Mucosa of descending colon (tissue), 3 donors: ENCODE measurements at regions of chr9 and their contacts with region 1.

Region 1: GRCh38 chr9:130770679-130771442 is 64.2 kb upstream of the ABL1 start:
- DNase-seq: peak in 1 of 3 donors; percentile 48
- ATAC-seq: peak; percentile 48
- H3K4me3 ChIP-seq: no peak overlapping the region
- H3K4me1 ChIP-seq: peaks cover 38% of the 10 kb centered on the region
- CTCF ChIP-seq: peak; percentile 38

Region 2: DNA sequence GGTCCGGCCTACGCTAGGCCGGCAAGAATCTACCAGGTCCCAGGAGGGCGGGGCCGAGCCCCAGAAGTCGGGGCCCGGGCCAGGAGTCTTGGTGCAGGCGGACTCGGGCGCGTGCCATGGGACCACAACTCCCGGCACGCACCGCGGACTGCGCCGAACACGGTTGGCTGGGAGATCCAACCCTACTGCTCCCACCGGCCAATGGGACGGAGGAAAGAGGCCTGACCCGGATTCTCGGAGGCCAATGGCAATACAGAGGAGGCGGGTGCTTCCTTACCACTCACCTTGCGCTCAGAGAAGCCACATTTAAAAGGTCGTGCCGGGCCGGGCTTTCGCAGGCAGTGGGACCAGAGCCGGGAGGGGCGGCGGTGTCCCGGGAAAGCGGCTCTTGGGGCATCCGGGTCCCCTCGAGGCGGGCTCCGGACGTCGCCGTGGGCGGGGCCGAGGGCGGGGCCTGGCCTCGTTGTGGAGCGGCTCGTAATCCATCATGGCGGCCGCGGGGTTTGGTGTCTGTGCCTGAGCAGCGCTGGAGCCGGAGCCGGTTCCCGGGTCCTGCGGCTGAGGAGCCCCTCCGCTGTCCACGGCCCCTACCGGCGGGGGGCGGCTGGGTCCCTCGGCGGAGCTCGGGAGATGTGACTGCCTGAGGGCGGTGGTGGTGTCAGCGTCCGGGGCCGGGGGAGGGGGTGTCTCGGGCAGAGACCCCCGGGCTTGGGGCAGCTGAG is 58.1 kb before region 1 on chr9:
- intact Hi-C with region 1: loop called in 1 of 2 experiments (anchors 10 kb)
- DNase-seq: peak; percentile 97 to 98 (median 98)
- ATAC-seq: peak; percentile 96
- H3K4me3 ChIP-seq: peak overlapping the region; percentile 98
- H3K4me1 ChIP-seq: peaks cover 18% of the 10 kb centered on the region
- CTCF ChIP-seq: no peak

Region 3: DNA sequence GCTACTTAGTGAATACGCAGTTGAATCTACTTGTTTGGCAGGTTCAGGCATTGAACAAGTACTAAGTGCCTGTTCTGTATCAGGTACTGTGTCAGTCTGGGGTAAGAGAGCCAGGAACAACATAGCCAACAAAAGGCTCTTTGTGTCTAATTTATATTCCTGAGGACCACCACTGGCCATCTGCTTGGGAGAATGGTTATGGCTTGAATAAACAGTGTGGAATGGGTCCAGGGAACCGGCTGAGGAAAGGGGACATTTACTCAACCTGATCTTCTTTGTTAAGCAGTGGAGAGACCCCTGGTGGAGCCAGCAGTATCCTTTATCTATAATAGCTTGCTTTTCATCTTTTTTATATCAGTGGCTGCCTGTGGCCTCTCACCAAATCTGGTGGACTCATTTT is 38.7 kb before region 1 on chr9:
- intact Hi-C with region 1: loop called in 1 of 2 experiments (anchors 5 kb)
- DNase-seq: no peak
- ATAC-seq: peak; percentile 12
- H3K4me3 ChIP-seq: no peak overlapping the region
- H3K4me1 ChIP-seq: peaks cover 20% of the 10 kb centered on the region
- CTCF ChIP-seq: no peak

Region 4: DNA sequence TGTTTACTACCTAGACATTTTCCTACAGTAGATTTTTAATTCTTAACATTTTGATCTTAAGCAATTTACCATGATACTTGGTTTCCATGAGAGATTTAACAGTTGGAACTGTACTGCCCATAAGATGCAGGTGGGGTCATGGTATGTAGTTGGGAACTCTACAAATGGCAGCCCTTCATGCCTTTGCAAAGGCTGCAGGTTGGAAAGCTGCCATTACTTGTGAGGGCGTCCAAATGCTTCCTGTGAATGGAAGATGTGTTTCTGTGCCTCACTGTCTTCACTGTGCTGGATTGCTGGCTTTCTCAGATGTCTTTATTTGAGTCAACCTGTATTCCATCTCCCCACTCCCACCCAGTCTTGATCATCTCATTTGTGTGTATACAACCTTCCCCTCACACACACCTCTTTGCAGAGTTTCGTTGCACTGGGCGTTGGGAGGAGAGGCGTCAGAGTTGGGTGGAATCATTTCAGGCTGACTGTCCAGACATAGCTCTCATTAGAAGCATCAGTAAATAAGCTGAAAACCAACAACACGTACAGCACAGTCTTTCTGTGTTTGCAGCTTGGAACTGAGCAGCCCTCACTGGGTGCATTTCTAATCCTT is 49.4 kb after region 1 on chr9:
- intact Hi-C with region 1: no loop called
- DNase-seq: no peak
- ATAC-seq: no peak
- H3K4me3 ChIP-seq: no peak overlapping the region
- H3K4me1 ChIP-seq: peaks cover 18% of the 10 kb centered on the region
- CTCF ChIP-seq: no peak

Region 5: DNA sequence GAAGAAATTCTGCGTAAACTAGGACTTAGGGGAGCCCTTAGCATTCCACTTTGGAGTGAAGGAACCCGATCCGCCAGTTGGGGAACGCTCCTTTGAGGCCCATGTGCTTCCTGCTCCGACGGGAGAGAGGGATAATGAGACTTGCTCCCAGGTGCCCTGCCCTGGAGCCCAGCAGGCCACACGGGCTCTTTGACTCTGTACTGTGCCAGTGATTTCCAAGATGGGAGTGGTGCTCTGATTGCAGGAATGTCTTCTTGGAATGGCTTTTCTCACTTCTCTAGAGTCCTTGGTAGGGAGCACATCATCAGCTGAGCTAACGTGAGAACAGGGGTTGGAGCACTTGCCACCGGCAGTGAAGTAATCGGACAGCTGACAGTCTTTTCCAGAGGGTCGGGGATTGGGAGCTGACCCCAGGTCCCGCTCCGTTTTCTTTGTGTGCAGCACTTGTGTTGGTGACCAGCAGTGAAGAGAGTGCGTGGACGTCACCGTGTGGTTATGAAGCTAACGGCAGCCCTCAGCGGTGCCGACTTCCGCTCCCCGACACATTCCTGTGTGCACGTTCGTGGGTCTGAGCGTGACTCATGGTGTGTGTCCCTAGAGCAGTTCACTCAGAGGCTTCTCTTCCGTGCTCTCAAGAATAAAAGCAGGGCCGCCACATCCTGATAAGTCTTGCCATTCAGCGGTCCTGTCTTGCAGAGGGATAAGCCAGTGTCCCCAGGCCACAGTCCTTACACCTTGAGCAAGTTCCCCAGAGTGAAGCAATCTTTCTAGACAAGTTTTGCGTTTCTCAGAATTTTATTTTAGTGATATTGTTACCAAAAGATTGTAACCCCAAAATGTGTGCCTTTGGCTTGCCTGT is 89.8 kb after region 1 on chr9:
- intact Hi-C with region 1: loop called (anchors 5 kb)
- DNase-seq: peak; percentile 48 to 66 (median 51)
- ATAC-seq: peak; percentile 59
- H3K4me3 ChIP-seq: no peak overlapping the region
- H3K4me1 ChIP-seq: no peaks in the 10 kb centered on the region
- CTCF ChIP-seq: no peak